ENCODE measurements at regions of chr9 and their contacts with region 1.

Region 1: DNA sequence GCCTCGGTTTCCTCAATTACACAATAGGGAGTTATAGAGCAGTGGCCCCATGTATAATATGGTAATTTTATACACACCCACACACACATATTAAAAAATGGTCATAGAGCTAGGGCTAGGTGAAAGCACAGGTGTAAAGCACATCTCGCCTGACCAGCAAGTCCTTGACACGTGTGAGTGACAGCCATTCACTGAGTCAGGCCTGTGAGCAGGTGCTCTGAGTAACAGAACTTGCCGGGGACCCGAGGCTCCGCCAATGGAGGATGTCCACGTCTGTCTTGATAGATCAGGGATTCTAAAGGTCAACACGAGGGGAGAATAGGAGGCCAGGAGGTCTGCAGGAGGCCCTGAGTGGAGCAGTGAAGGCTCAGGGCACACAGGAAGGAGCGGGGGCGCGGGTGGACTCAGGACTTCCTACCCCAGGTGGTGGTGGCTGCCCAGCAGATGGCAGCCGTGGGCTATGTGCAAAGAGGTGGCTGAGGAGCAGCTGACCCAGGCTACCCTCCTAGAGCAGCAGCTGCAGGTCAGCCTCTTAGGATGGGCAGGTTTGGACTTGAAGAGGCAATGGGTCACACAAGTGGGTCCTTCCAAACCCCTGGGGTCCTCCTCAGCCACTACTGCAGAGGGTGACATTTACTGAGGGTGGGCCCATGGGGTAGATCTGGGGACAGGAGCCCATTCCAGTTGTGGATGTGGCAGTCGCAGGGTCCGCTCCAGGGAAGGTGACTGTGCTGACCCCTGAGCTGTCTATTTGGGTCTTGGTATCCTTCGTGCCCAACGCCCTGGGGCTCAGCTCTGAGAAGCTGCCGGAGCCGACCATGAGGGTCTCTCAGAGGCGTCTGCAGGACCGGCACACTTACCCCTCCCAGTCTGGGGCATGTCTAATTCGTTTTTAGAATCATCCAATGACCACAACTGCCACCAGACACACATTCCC is 45.9 kb downstream of the PRRT1B start:
- DNase-seq: peak; percentile 70
- ATAC-seq: peak; percentile 97
- H3K4me3 ChIP-seq: no peak overlapping the region
- H3K27ac ChIP-seq: no peak overlapping the region
- H3K4me1 ChIP-seq: 0 out of 2 replicates have a peak, but pooled peaks cover 3% of the 10 kb centered on the region
- H3K27me3 ChIP-seq: no peaks in the 10 kb centered on the region
- CTCF ChIP-seq: peak; percentile 97
- POLR2A ChIP-seq: no peak
- RAD21 ChIP-seq: peak; percentile 94

Region 2: GRCh38 chr9:131656356-131657036 is 65.3 kb after region 1 on chr9:
- CTCF ChIA-PET with region 1: no interaction called
- POLR2A ChIA-PET with region 1: no interaction called
- dilution Hi-C with region 1: no loop called
- in situ Hi-C with region 1: no loop called
- intact Hi-C with region 1: loop called (anchors 5 kb)
- DNase-seq: no peak
- ATAC-seq: no peak
- H3K4me3 ChIP-seq: no peak overlapping the region
- H3K27ac ChIP-seq: peak overlapping the region; percentile 97; the same call in 1 of the 2 replicates
- H3K4me1 ChIP-seq: peaks cover 32% of the 10 kb centered on the region
- H3K27me3 ChIP-seq: no peaks in the 10 kb centered on the region
- CTCF ChIP-seq: no peak
- POLR2A ChIP-seq: no peak
- RAD21 ChIP-seq: no peak

Region 3: GRCh38 chr9:131739980-131740648 is 148.9 kb after region 1 on chr9 and contains the start of gene RAPGEF1:
- CTCF ChIA-PET with region 1: interaction called, 6 read pairs
- POLR2A ChIA-PET with region 1: no interaction called
- dilution Hi-C with region 1: no loop called
- in situ Hi-C with region 1: loop called (anchors 5 kb)
- intact Hi-C with region 1: loop called (anchors 2 kb)
- DNase-seq: no peak
- ATAC-seq: peak; percentile 84
- H3K4me3 ChIP-seq: peak within 1 kb of the TSS; percentile 81
- H3K27ac ChIP-seq: peak within 1 kb of the TSS; percentile 65
- H3K4me1 ChIP-seq: peaks cover 15% of the 10 kb centered on the region
- H3K27me3 ChIP-seq: no peaks in the 10 kb centered on the region
- CTCF ChIP-seq: peak; percentile 99
- POLR2A ChIP-seq: no peak
- RAD21 ChIP-seq: peak; percentile 88
- total RNA-seq, gene RAPGEF1: 13.1 and 13.3 TPM in 2 replicates

Region 4: GRCh38 chr9:131747356-131747755 is 156.2 kb after region 1 on chr9:
- CTCF ChIA-PET with region 1: interaction called, 3 read pairs
- POLR2A ChIA-PET with region 1: no interaction called
- dilution Hi-C with region 1: no loop called
- in situ Hi-C with region 1: loop called (anchors 5 kb)
- intact Hi-C with region 1: loop called (anchors 1 kb)
- DNase-seq: peak; percentile 58
- ATAC-seq: peak; percentile 86
- H3K4me3 ChIP-seq: no peak overlapping the region
- H3K27ac ChIP-seq: no peak overlapping the region
- H3K4me1 ChIP-seq: no peaks in the 10 kb centered on the region
- H3K27me3 ChIP-seq: peaks cover 12% of the 10 kb centered on the region
- CTCF ChIP-seq: peak; percentile 68
- POLR2A ChIP-seq: no peak
- RAD21 ChIP-seq: peak; percentile 71

Region 5: GRCh38 chr9:132268725-132269352 is 677.7 kb after region 1 on chr9:
- CTCF ChIA-PET with region 1: no interaction called
- POLR2A ChIA-PET with region 1: no interaction called
- dilution Hi-C with region 1: no loop called
- in situ Hi-C with region 1: loop called (anchors 25 kb)
- intact Hi-C with region 1: no loop called
- DNase-seq: peak; percentile 67
- ATAC-seq: peak; percentile 89
- H3K4me3 ChIP-seq: no peak overlapping the region
- H3K27ac ChIP-seq: no peak overlapping the region
- H3K4me1 ChIP-seq: no peaks in the 10 kb centered on the region
- H3K27me3 ChIP-seq: no peaks in the 10 kb centered on the region
- CTCF ChIP-seq: peak; percentile 71
- POLR2A ChIP-seq: no peak
- RAD21 ChIP-seq: peak; percentile 53